MCF 10A (cell line): ENCODE measurements at regions of chr2 and their contacts with region 1.

Region 1: GRCh38 chr2:26033818-26034636 is at the start of gene RAB10:
- DNase-seq: peak; percentile 99
- H3K4me3 Mint-ChIP-seq: peak within 1 kb of the TSS; percentile 96
- H3K27ac Mint-ChIP-seq: peak within 1 kb of the TSS; percentile 92
- H3K4me1 Mint-ChIP-seq: peaks cover 22% of the 10 kb centered on the region
- H3K27me3 Mint-ChIP-seq: no peaks in the 10 kb centered on the region
- CTCF ChIP-seq: no peak
- total RNA-seq, gene RAB10: 139 and 147 TPM in 2 replicates

Region 2: DNA sequence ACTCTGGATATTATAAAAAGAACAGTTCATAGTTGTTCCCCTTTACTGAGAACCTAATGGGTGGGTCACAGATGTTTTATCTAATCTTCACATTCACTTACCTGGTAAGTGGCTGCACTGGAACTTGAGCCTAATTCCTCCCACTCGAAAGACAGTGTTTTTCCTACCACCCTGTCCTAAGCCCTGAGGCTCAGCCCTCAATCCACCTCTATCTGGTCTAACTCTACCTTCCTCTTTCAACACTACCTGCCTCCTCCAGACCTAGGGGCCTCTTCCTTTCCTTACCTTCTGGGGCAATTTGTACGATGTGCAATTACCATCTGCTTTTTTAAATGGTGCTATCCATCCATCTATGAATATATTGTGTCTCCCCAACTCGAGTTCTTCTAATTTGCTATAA is 42.1 kb before region 1 on chr2:
- CTCF ChIA-PET with region 1: interaction called, 5 read pairs
- POLR2A ChIA-PET with region 1: interaction called, 73 read pairs
- intact Hi-C with region 1: loop called (anchors 1 kb)
- DNase-seq: no peak
- H3K4me3 Mint-ChIP-seq: no peak overlapping the region
- H3K27ac Mint-ChIP-seq: no peak overlapping the region
- H3K4me1 Mint-ChIP-seq: peaks cover 11% of the 10 kb centered on the region
- H3K27me3 Mint-ChIP-seq: no peaks in the 10 kb centered on the region
- CTCF ChIP-seq: no peak

Region 3: GRCh38 chr2:26008822-26009566 is 25.0 kb before region 1 on chr2:
- CTCF ChIA-PET with region 1: interaction called, 4 read pairs
- POLR2A ChIA-PET with region 1: interaction called, 250 read pairs
- intact Hi-C with region 1: loop called (anchors 1 kb)
- DNase-seq: peak; percentile 99
- H3K4me3 Mint-ChIP-seq: peak overlapping the region; percentile 29
- H3K27ac Mint-ChIP-seq: peak overlapping the region; percentile 91
- H3K4me1 Mint-ChIP-seq: peaks cover 35% of the 10 kb centered on the region
- H3K27me3 Mint-ChIP-seq: no peaks in the 10 kb centered on the region
- CTCF ChIP-seq: no peak

Region 4: DNA sequence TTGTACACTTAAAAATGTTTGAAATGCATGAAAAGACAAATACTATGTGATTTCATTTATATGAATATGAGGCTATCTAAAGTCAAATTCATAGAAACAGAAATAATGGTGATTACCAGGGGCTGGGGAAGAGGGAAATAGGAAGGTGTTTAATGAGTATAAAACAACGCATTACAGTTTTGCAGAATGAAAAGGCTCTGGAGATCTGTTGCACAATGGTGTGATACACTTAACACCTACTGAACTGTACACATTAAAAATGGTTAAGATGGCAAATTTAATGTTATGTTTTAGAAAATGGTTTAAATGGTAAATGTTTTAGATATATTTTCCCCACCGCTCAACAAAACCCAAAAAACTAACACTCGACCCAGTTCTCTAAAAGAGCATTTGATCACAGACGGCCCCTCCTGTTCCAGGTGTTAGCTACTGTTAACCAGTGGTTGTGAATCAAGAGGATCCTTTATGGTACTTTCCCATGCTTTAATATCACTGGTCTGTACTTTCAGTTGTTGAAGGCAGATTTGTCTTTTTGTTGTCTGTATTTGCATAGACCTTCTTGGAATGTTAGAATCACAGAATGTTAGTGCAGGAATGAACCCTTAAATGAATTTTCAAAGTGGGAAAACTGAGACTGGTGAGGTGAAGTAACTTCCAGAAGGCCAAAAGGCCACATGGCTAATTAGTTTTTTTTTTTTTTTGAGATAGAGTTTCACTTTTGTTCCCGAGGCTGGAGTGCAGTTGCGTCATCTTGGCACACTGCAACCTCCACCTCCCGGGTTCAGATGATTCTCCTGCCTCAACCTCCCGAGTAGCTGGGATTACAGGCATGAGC is 10.1 kb after region 1 on chr2:
- CTCF ChIA-PET with region 1: interaction called, 5 read pairs
- POLR2A ChIA-PET with region 1: interaction called, 69 read pairs
- intact Hi-C with region 1: no loop called
- DNase-seq: peak; percentile 76
- H3K4me3 Mint-ChIP-seq: peak overlapping the region; percentile 51
- H3K27ac Mint-ChIP-seq: peak overlapping the region; percentile 84
- H3K4me1 Mint-ChIP-seq: peaks cover 12% of the 10 kb centered on the region
- H3K27me3 Mint-ChIP-seq: no peaks in the 10 kb centered on the region
- CTCF ChIP-seq: no peak

Region 5: GRCh38 chr2:26088032-26088643 is 54.1 kb after region 1 on chr2:
- CTCF ChIA-PET with region 1: no interaction called
- POLR2A ChIA-PET with region 1: interaction called, 13 read pairs
- intact Hi-C with region 1: no loop called
- DNase-seq: peak; percentile 39
- H3K4me3 Mint-ChIP-seq: no peak overlapping the region
- H3K27ac Mint-ChIP-seq: no peak overlapping the region
- H3K4me1 Mint-ChIP-seq: peaks cover 45% of the 10 kb centered on the region
- H3K27me3 Mint-ChIP-seq: no peaks in the 10 kb centered on the region
- CTCF ChIP-seq: peak; percentile 45

Region 6: GRCh38 chr2:26114151-26114550 is 80.1 kb after region 1 on chr2:
- CTCF ChIA-PET with region 1: no interaction called
- POLR2A ChIA-PET with region 1: no interaction called
- intact Hi-C with region 1: no loop called
- DNase-seq: no peak
- H3K4me3 Mint-ChIP-seq: no peak overlapping the region
- H3K27ac Mint-ChIP-seq: no peak overlapping the region
- H3K4me1 Mint-ChIP-seq: no peaks in the 10 kb centered on the region
- H3K27me3 Mint-ChIP-seq: no peaks in the 10 kb centered on the region
- CTCF ChIP-seq: no peak

Region 7: GRCh38 chr2:26244309-26245121 is 210.5 kb after region 1 on chr2 and contains the starts of genes HADHA and HADHB:
- CTCF ChIA-PET with region 1: no interaction called
- POLR2A ChIA-PET with region 1: interaction called, 24 read pairs
- intact Hi-C with region 1: no loop called
- DNase-seq: peak; percentile 92
- H3K4me3 Mint-ChIP-seq: peak within 1 kb of the TSS; percentile 97
- H3K27ac Mint-ChIP-seq: peak within 1 kb of the TSS; percentile 99
- H3K4me1 Mint-ChIP-seq: peaks cover 24% of the 10 kb centered on the region
- H3K27me3 Mint-ChIP-seq: no peaks in the 10 kb centered on the region
- CTCF ChIP-seq: no peak
- total RNA-seq, gene HADHA: 132 and 152 TPM in 2 replicates
- total RNA-seq, gene HADHB: 126 and 143 TPM in 2 replicates